ENCODE measurements at regions of chr5 and their contacts with region 1.

Region 1: GRCh38 chr5:93582677-93583438 is at the start of gene NR2F1:
- DNase-seq: peak; percentile 51 to 79 (median 62)
- ATAC-seq: peak; percentile 91
- H3K4me3 ChIP-seq: peak within 1 kb of the TSS; percentile 8; the same call in 1 of the 2 replicates
- H3K27ac ChIP-seq: no peak within 1 kb of the TSS
- H3K4me1 ChIP-seq: peaks cover 0 to 14% of the 10 kb centered on the region in 2 experiments; a peak in 2 of 5 replicates
- H3K27me3 ChIP-seq: peaks cover 0 to 12% of the 10 kb centered on the region in 2 experiments; a peak in 3 of 5 replicates
- CTCF ChIP-seq: no peak
- EP300 ChIP-seq: no peak
- POLR2A ChIP-seq: no peak
- RAD21 ChIP-seq: no peak
- polyA plus RNA-seq, gene NR2F1: not detected

Region 2: DNA sequence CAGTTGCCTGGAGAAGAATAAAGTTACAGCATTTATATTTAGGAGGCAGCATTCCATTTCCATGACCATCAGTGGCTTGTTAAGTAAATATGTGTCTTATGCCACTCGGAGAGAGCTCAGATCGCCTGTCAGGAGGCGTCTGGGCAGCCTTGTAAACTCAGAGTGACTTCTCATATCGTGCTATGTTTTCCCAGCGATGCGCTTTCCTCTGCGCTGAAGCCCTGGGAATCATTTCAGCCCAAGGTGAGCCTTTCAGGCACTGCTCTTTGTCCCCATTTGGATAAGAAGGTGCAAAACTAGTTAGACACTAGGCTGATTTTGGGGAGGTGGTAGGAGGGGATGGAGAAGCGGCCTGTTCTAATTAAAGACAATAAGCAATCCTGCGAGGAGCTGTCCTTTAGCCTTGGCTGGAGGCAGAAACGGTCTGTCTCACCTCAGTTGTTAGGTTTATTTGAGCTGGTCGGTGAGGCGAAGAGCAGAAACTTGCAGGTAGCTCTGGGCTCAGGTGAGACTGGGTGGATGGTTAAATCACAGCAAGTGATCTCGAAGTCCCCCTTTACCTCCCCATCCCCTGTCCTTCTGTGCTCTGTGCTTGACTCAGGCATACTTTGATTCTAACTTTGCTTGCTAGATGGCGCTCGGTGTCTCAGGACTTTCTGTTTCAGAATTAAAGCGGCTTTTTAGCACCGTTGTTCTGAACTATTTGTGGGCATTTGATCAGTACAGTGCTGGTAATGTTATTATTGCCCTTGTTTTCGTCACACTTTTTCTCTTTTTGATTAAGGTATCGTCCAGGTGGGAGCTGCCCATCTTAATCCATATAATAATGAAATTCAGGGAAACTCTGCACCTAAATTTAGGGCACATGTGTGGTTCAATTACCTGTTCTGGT is 24.8 kb after region 1 on chr5:
- CTCF ChIA-PET with region 1: no interaction called
- POLR2A ChIA-PET with region 1: no interaction called
- in situ Hi-C with region 1: no loop called
- intact Hi-C with region 1: no loop called
- DNase-seq: peak in 1 of 4 experiments; percentile 24
- ATAC-seq: peak; percentile 46; the same call in 2 of the 3 replicates
- H3K4me3 ChIP-seq: no peak overlapping the region
- H3K27ac ChIP-seq: no peak overlapping the region
- H3K4me1 ChIP-seq: no peaks in the 10 kb centered on the region
- H3K27me3 ChIP-seq: peaks cover 6 to 11% of the 10 kb centered on the region in 2 experiments; a peak in 4 of 5 replicates
- CTCF ChIP-seq: peak; percentile 15 to 44 (median 34); a peak in 4 of 6 replicates
- EP300 ChIP-seq: no peak
- POLR2A ChIP-seq: no peak
- RAD21 ChIP-seq: peak; percentile 41 to 57

Region 3: DNA sequence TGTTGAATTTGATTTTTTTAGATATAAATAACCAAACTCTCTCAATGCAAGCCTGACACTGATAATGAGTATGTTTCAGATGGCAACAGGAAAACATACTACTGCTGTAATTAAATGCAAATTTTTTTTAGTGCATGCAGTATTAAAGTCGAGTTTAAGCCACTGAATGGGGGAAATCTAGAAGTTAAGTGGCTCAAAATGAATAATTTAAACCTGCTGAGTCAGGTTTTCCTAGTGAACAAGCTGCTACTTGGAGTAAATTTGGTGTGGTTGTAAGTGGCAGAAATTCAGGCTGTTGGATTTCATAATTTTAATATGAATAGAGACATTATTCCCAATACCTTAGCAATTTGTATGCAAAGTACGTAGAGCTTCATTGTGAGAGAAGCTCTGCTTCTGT is 1157.4 kb after region 1 on chr5:
- CTCF ChIA-PET with region 1: no interaction called
- POLR2A ChIA-PET with region 1: no interaction called
- in situ Hi-C with region 1: loop called (anchors 25 kb)
- intact Hi-C with region 1: loop called (anchors 5 kb)
- DNase-seq: no peak
- ATAC-seq: no peak
- H3K4me3 ChIP-seq: no peak overlapping the region
- H3K27ac ChIP-seq: no peak overlapping the region
- H3K4me1 ChIP-seq: peaks cover 0 to 3% of the 10 kb centered on the region in 2 experiments; a peak in 1 of 5 replicates
- H3K27me3 ChIP-seq: no peaks in the 10 kb centered on the region
- CTCF ChIP-seq: no peak
- EP300 ChIP-seq: no peak
- POLR2A ChIP-seq: no peak
- RAD21 ChIP-seq: no peak

Region 4: DNA sequence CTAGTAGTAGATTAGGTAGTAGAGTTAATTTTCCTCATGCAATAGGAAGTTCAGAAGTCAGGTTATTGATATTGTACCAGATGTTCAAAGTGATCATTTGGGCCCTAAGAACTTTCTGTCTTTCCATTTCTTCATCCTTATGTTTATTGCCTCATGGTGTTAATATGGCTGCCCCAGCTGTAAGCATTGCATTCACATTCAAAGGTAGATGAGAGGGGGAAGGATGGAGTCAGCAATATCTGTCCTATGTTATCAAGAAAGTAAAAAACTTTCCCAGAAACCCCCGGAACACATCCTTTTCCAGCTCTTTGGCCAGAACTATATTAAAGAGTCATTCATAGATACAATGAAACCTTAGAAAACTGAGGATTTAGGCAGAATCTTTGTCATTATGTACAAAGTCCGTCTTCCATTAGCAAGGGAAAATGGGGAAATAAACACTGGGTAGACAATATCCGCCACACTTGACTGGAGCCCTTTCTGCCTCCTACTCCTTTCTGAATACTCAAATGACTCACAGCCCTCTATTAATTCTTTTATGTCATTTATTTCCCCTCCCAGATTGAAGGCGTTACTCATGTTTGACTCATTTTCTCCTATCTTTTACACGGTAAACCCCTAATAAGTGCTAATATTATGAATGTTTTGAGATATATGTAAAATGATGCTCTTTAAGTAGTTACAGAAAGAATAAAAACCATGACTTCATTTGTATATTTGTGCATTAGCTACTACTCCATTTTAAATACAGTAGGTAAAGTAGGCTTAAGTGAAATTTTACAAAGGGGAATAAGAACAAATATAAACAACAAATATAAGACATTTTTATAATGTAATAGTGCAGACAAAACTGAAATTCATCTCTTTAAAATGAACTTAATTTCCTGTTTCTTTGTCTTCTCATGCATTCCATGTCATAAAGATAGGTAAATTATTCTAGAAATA is 1163.2 kb after region 1 on chr5:
- CTCF ChIA-PET with region 1: no interaction called
- POLR2A ChIA-PET with region 1: no interaction called
- in situ Hi-C with region 1: loop called (anchors 25 kb)
- intact Hi-C with region 1: no loop called
- DNase-seq: no peak
- ATAC-seq: no peak
- H3K4me3 ChIP-seq: no peak overlapping the region
- H3K27ac ChIP-seq: no peak overlapping the region
- H3K4me1 ChIP-seq: peaks cover 0 to 3% of the 10 kb centered on the region in 2 experiments; a peak in 1 of 5 replicates
- H3K27me3 ChIP-seq: no peaks in the 10 kb centered on the region
- CTCF ChIP-seq: no peak
- EP300 ChIP-seq: no peak
- POLR2A ChIP-seq: no peak
- RAD21 ChIP-seq: no peak